Activated naive CD4-positive, alpha-beta T cell treated with anti-CD3 and anti-CD28 coated beads for 36 hours (primary cell): ENCODE measurements at regions of chr10 and their contacts with region 1.

Region 1: DNA sequence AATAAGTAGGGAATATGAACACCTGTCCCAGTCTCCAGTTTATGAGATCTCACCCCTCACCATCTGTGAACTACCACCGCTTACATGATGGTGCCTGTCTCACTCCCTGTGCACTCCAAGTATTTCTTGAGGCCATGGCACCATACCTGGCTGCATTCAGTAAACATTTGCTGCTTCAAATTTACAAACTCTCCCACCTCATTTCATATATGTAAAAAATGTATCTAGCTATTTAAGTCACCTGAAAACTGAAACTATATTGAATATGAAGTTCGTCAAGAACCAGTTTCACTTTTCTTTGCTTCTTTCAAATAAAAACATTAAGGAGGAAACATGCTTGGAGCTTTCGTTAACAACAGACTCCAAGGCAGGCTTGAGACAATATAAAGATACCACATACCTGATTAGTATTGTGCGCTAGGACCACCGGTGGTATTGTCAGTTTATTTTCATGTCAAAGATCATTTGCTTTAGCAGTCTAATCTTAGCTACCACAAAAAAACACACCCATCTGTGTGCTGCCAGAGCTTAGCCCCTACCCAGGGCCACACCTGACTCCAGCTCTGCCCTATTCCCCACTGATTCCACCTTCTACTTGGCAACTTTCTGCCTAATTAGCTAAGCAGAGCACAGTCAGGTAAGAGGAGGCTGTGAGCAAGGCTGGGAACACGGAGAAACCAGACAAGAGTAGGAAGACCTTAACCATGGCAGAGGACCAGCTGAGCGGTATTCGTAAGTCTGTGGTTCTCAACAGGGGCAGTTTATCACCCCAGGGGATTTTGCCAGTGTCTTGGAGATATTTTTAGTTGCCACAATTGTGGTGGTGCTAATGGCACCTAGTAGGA is 92.0 kb downstream of the ZFAND4 start:
- DNase-seq: peak; percentile 64
- H3K4me3 Mint-ChIP-seq: peak overlapping the region; percentile 83
- H3K27ac Mint-ChIP-seq: peak overlapping the region; percentile 97
- H3K4me1 Mint-ChIP-seq: peaks cover 42% of the 10 kb centered on the region
- H3K27me3 Mint-ChIP-seq: no peaks in the 10 kb centered on the region

Region 2: GRCh38 chr10:45008524-45009161 is 572.0 kb before region 1 on chr10:
- CTCF ChIA-PET with region 1: no interaction called
- intact Hi-C with region 1: loop called (anchors 10 kb)
- DNase-seq: peak; percentile 33
- H3K4me3 Mint-ChIP-seq: no peak overlapping the region
- H3K27ac Mint-ChIP-seq: no peak overlapping the region
- H3K4me1 Mint-ChIP-seq: no peaks in the 10 kb centered on the region
- H3K27me3 Mint-ChIP-seq: no peaks in the 10 kb centered on the region

Region 3: DNA sequence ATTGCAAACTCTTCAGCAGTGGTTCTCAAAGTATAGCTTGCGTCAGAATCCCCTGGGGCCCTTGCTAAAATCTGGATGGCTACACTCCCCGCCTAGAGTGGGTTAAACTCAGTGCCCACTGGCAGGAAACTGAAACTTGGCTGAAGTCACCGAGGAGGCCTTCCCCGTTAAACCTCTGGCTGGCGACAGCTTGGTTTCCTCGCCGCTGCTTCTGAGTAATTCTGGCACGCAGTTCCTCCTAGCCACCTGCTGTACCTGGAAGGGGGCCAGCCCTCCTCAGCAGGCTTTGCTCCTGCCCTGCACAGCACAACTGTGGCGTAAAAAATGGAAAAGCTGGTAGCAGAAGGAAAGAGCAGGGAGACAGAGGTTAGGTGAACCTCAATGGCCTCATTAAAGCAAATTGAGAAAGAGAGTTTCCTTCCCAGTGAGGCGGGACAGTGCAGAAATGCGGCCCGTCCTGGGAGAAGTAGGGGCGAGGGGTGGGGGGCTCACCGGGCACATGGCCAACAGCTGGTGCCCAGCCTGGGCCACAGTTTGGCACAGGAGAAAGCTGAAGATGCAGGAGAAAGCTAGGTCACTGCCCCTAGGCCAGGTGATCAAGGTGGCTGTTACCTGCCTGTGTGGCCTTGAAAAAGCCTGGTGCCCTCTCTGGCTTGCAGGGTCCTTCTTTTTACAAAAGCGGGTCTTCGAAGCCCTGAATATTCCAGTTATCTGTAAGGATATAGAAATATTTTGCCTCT is 160.0 kb before region 1 on chr10:
- CTCF ChIA-PET with region 1: no interaction called
- intact Hi-C with region 1: loop called (anchors 5 kb)
- DNase-seq: peak; percentile 68
- H3K4me3 Mint-ChIP-seq: peak overlapping the region; percentile 86
- H3K27ac Mint-ChIP-seq: peak overlapping the region; percentile 4
- H3K4me1 Mint-ChIP-seq: peaks cover 36% of the 10 kb centered on the region
- H3K27me3 Mint-ChIP-seq: no peaks in the 10 kb centered on the region

Region 4: DNA sequence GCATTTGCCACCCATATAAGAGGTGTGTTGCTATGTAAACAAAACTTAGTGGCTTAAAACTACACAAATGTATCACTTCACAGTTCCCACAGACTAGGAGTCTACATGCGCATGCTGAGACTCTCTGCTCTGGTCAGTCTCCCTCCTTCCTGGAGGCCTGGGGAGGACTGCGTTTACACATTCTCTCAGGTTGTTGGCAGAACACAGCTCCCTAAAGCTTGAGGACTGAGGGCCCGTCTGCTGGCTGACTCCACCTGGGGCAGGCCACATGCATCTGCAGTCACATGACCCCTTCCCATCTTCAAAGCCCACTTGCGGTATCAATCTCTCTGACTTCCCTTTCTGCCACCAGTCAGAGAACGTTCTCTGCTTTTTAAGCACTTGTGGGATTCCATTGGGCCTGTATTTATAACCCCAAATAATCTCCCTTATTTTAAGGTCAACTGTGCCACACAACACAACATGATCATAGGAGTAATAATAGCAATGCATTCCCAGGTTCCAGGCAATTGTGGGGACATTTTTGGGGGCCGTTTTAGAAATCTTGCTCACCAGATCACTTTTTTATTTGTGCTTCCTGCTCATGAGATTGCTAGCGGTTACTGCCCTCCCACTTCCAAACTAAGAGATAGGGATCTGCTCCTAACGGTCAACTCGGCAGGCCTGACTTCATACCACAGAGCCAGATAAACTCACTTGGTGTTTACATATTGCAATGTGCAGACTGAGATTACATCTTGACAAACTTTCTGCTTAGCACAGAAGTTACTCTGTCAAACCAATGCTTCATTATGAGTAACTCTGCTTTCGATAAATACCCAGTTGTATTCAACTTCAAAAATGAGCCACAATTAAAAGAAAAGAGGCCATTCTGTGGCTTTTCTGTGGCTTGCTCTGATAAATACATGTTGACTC is 110.2 kb before region 1 on chr10:
- CTCF ChIA-PET with region 1: no interaction called
- intact Hi-C with region 1: loop called (anchors 1 kb)
- DNase-seq: peak; percentile 77
- H3K4me3 Mint-ChIP-seq: peak overlapping the region; percentile 48
- H3K27ac Mint-ChIP-seq: peak overlapping the region; percentile 87
- H3K4me1 Mint-ChIP-seq: peaks cover 27% of the 10 kb centered on the region
- H3K27me3 Mint-ChIP-seq: no peaks in the 10 kb centered on the region

Region 5: DNA sequence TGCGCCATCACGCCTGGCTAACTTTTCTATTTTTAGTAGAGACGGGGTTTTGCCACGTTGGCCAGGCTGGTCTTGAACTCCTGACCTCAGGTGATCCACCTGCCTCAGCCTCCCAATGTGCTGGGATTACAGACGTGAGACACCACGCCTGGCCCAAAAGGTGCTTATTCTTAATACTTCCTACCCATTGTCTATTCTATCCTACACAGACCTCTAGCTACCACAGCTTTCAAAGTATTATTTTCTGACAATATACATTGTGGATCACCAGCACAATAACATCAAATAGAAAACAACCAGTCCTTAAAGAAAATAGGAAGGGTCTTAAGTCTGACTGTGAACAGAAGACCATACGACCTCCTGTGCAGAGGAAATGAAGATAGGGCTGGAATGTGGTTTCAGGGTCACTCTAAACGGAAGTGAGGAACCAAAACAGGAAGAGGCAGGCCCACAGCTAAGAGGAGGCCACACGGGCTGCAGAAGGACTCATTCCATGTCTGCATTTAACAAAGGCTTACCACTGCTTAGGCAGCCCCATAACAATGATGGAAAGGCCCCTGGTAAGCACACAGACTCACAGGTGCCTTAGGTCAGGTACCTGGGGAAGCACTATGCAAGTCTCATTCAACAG is 23.2 kb before region 1 on chr10:
- CTCF ChIA-PET with region 1: interaction called, 5 read pairs
- intact Hi-C with region 1: loop called (anchors 1 kb)
- DNase-seq: peak; percentile 32
- H3K4me3 Mint-ChIP-seq: peak overlapping the region; percentile 29
- H3K27ac Mint-ChIP-seq: peak overlapping the region; percentile 13
- H3K4me1 Mint-ChIP-seq: peaks cover 34% of the 10 kb centered on the region
- H3K27me3 Mint-ChIP-seq: no peaks in the 10 kb centered on the region

Region 6: GRCh38 chr10:45594276-45595106 is 13.9 kb after region 1 on chr10:
- CTCF ChIA-PET with region 1: interaction called, 7 read pairs
- intact Hi-C with region 1: loop called (anchors 1 kb)
- DNase-seq: peak; percentile 87
- H3K4me3 Mint-ChIP-seq: peak overlapping the region; percentile 77
- H3K27ac Mint-ChIP-seq: peak overlapping the region; percentile 37
- H3K4me1 Mint-ChIP-seq: peaks cover 29% of the 10 kb centered on the region
- H3K27me3 Mint-ChIP-seq: no peaks in the 10 kb centered on the region

Region 7: GRCh38 chr10:46092524-46093081 is 512.0 kb after region 1 on chr10:
- CTCF ChIA-PET with region 1: no interaction called
- intact Hi-C with region 1: loop called (anchors 5 kb)
- DNase-seq: peak; percentile 48
- H3K4me3 Mint-ChIP-seq: peak overlapping the region; percentile 11
- H3K27ac Mint-ChIP-seq: no peak overlapping the region
- H3K4me1 Mint-ChIP-seq: peaks cover 13% of the 10 kb centered on the region
- H3K27me3 Mint-ChIP-seq: no peaks in the 10 kb centered on the region